ENCODE measurements at regions of chr18 and their contacts with region 1.

Region 1: GRCh38 chr18:56575819-56576663 is 62.4 kb downstream of the TXNL1 start:
- DNase-seq: no peak
- H3K4me3 ChIP-seq: no peak overlapping the region
- H3K27ac ChIP-seq: no peak overlapping the region
- H3K4me1 ChIP-seq: peaks cover 0 to 10% of the 10 kb centered on the region in 2 donors
- H3K27me3 ChIP-seq: no peaks in the 10 kb centered on the region
- CTCF ChIP-seq: peak; percentile 53 to 73 (median 63)

Region 2: DNA sequence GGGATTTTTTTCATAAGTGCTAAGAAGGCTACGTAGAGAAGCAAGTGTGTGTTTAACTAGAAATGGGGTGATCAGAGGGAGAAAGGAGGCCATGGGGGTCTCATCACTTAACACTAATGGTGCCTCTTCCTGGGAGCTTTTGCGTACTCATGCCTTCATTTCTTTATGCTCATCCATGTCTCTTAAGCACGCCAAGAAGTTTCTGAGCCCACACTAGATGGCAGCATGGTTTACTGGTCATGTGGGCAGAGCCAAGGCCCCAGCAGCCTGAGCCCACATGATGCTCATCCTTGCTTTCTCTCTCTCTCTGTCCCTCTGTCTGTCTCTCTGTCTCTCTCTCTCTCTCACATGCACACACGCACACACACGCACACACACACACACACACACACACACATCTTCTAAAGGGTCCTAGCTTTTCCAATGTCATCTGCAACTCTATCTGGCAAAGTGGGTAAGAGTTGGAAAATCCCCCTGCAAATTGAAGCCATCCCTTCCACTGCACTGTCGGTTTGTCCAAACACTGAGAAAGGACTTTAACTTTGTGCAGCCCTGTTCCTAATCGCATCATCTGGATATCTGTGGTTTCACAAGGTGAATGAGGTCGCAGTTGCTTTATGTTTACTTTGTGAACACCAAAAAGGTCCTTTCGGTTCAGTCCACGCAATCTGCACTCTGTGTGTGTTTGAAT is 1479.6 kb before region 1 on chr18:
- intact Hi-C with region 1: loop called (anchors 5 kb)
- DNase-seq: no peak
- H3K4me3 ChIP-seq: no peak overlapping the region
- H3K27ac ChIP-seq: no peak overlapping the region
- H3K4me1 ChIP-seq: no peaks in the 10 kb centered on the region
- H3K27me3 ChIP-seq: no peaks in the 10 kb centered on the region
- CTCF ChIP-seq: peak in 1 of 3 experiments; percentile 37

Region 3: GRCh38 chr18:55343396-55344073 is 1232.5 kb before region 1 on chr18:
- intact Hi-C with region 1: loop called (anchors 5 kb)
- DNase-seq: no peak
- H3K4me3 ChIP-seq: no peak overlapping the region
- H3K27ac ChIP-seq: no peak overlapping the region
- H3K4me1 ChIP-seq: peaks cover 0 to 7% of the 10 kb centered on the region in 2 donors
- H3K27me3 ChIP-seq: no peaks in the 10 kb centered on the region
- CTCF ChIP-seq: peak; percentile 32 to 69 (median 67)

Region 4: DNA sequence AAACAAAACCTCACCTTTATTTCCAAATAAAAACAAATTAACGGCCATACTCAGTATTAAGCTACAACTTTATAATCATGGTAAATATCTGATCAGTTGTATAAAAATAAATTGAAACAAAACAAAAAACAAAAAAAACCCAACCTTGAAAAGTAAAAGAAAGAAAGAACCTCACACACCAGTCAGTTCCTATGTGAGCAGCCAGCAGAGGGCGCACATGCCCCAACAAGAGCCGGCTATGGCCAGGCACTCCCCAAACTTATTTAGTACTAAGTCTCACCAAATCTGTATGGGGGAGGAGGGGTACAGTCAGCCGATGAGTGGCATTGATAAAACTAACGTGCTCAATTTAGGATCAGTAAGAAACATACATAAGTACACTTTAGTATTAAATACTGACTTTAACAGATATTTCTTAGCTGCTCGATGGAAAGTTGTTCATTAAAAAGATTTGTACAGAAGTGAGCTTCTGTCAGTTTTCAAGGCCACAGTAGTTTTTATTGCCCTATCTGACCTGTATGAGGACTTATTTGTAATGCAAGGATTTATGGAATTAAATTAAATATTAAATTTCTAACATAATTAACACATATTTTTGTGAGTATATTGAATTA is 1160.7 kb before region 1 on chr18:
- intact Hi-C with region 1: loop called (anchors 5 kb)
- DNase-seq: peak; percentile 22 to 92
- H3K4me3 ChIP-seq: no peak overlapping the region
- H3K27ac ChIP-seq: no peak overlapping the region
- H3K4me1 ChIP-seq: no peaks in the 10 kb centered on the region
- H3K27me3 ChIP-seq: no peaks in the 10 kb centered on the region
- CTCF ChIP-seq: peak; percentile 60 to 90 (median 85)

Region 5: DNA sequence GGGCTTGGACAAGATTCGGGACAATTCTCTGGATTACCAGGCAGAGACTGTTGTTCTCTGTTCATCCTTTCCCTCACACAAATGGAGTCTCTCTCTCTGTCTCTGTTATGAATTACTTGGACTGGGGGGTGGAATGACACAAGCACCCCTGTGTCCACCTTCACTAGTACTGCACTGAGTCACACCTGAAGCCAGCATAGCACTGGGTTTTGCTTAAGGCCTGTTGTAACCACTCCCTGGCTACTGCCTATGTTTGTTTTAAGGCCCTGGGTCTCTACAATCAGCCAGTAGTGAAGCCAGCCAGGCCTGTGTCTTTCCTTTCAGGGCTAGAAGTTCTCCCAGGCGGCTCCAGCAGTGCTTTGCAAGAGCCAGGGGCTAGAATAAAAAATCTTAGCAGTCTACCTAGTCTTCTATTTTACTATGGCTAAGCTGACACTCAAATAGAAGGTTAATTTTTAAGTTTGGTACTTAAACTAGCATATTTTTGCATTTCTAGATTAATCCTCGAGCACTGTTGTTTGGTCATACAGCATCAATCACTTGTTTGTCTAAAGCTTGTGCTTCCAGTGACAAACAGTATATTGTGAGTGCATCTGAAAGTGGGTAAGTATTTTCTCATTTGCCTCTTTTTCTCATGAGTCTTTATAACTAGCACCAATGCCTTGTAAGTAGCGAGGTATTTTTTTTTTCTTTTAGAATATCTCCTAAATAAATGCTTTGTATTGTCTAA is 103.0 kb after region 1 on chr18:
- intact Hi-C with region 1: no loop called
- DNase-seq: no peak
- H3K4me3 ChIP-seq: no peak overlapping the region
- H3K27ac ChIP-seq: no peak overlapping the region
- H3K4me1 ChIP-seq: no peaks in the 10 kb centered on the region
- H3K27me3 ChIP-seq: no peaks in the 10 kb centered on the region
- CTCF ChIP-seq: no peak

Measured in ascending aorta (tissue), 2 donors.